ENCODE measurements at regions of chr5 and their contacts with region 1.

Region 1: GRCh38 chr5:139711067-139711905 is 63.1 kb downstream of the CXXC5 start:
- DNase-seq: no peak
- H3K4me3 ChIP-seq: peak overlapping the region; percentile 57
- H3K27ac ChIP-seq: no peak overlapping the region
- H3K27me3 ChIP-seq: peaks cover 6% of the 10 kb centered on the region
- CTCF ChIP-seq: peak; percentile 18

Region 2: DNA sequence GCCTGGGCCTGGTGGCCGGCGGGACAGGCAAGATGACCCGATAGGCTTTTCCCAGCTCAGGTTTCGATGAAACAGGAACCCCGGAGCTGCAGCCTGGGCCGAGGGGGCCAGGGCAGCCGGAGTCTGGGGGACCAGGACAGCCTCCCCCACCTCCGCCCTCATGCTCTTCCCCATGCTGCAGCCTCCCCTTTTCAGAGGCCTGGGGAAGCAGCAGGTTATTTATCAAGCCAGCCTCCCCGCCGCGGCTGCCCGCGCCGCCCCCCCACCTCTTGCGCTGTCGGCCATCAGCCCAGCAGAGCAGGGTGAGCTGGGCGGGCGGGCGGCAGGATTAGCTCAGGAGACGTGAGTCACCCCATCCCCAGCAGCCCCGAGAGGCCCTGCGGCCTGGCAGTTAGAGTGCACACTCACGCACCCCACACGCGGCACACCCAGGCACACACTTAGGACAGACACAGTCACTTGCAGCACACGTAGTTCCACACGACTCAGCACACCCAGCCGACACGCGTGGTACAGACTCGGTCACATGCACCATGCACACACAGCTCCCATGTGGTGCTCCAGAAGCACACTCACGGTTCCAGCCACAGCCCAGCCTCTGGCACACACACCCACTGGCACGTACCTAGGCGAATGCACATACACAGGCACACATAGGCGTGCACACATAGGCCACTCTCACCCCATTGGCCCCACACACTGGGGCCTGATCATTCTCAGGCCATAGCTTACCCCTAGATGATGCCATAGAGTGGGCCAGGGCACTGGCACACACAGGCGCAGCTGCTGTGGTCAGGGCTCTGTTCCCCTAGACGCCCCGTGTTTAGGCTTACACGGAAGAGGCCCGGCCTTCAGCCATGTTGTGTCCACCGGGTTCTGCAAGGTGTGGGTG is 50.1 kb before region 1 on chr5:
- CTCF ChIA-PET with region 1: no interaction called
- POLR2A ChIA-PET with region 1: interaction called, 21 read pairs
- DNase-seq: peak; percentile 74
- H3K4me3 ChIP-seq: peak overlapping the region; percentile 4; the same call in 1 of the 2 replicates
- H3K27ac ChIP-seq: peak overlapping the region; percentile 71
- H3K27me3 ChIP-seq: no peaks in the 10 kb centered on the region
- CTCF ChIP-seq: no peak